ENCODE measurements at regions of chr2 and their contacts with region 1.

Region 1: GRCh38 chr2:186589612-186590349 is at the start of gene ITGAV:
- DNase-seq: peak; percentile 93
- ATAC-seq: peak; percentile 97
- H3K4me3 ChIP-seq: peak within 1 kb of the TSS; percentile 92 to 97 (median 95)
- H3K27ac ChIP-seq: peak within 1 kb of the TSS; percentile 89
- H3K4me1 ChIP-seq: peaks cover 46% of the 10 kb centered on the region
- H3K27me3 ChIP-seq: no peaks in the 10 kb centered on the region; a peak in 2 of 5 replicates
- CTCF ChIP-seq: peak; percentile 55
- EP300 ChIP-seq: 0 out of 4 replicates have a peak, but pooled peaks of 1 of the 2 experiments have one; percentile 21
- POLR2A ChIP-seq: peak; percentile 92 to 96
- RAD21 ChIP-seq: peak; percentile 73
- total RNA-seq, gene ITGAV: 35.8 and 60.4 TPM in 2 replicates

Region 2: GRCh38 chr2:186518945-186519344 is 70.8 kb before region 1 on chr2:
- CTCF ChIA-PET with region 1: no interaction called
- POLR2A ChIA-PET with region 1: interaction called, 11 read pairs
- in situ Hi-C with region 1: no loop called
- intact Hi-C with region 1: no loop called
- DNase-seq: no peak
- ATAC-seq: no peak
- H3K4me3 ChIP-seq: no peak overlapping the region
- H3K27ac ChIP-seq: no peak overlapping the region
- H3K4me1 ChIP-seq: no peaks in the 10 kb centered on the region
- H3K27me3 ChIP-seq: no peaks in the 10 kb centered on the region
- CTCF ChIP-seq: no peak
- EP300 ChIP-seq: no peak
- POLR2A ChIP-seq: no peak
- RAD21 ChIP-seq: no peak

Region 3: DNA sequence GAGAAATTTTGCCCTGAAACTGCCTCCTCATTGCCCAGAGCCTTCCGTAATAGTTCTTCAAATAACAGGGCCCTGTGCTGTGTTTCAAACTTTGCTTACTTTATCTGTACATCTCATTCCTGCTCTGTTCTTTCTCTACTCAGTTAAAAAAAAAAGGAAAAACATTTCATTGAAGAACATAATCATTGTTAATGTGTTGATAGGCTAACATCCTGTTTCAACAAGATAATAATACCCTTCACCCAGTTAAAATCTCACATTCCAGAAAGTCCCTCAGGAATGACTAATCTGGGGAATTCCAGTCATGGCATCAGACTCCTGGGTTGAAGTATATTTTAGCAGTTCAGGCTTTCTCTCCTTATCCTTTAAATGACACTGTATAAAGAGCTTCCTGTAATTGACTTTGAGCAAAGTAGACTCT is 45.5 kb before region 1 on chr2:
- CTCF ChIA-PET with region 1: no interaction called
- POLR2A ChIA-PET with region 1: interaction called, 12 read pairs
- in situ Hi-C with region 1: no loop called
- intact Hi-C with region 1: no loop called
- DNase-seq: peak; percentile 93
- ATAC-seq: peak; percentile 91
- H3K4me3 ChIP-seq: no peak overlapping the region; a peak in 1 of 6 replicates
- H3K27ac ChIP-seq: peak overlapping the region; percentile 53
- H3K4me1 ChIP-seq: peaks cover 54% of the 10 kb centered on the region
- H3K27me3 ChIP-seq: no peaks in the 10 kb centered on the region
- CTCF ChIP-seq: no peak
- EP300 ChIP-seq: peak in 1 of 2 experiments; percentile 83; a peak in 3 of 4 replicates
- POLR2A ChIP-seq: no peak
- RAD21 ChIP-seq: no peak

Region 4: DNA sequence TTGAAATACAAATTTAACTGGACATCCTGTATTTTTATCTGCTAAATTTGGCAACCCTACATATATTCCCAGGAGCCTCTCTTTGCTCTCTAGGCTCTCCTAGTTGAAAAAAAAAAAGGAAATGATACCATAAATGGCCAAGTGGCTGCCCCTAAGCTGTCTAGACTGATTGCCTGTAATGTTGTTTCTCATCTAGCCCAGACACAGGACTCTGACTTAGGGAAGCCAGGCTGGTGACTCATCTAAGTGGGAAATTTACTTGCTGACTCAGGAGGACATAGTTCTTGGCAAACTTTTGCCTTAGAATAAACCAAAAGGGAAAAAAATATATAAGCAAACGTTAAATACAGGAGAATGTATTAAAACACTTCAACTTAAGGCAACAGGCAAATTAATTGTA is 14.5 kb before region 1 on chr2:
- CTCF ChIA-PET with region 1: no interaction called
- POLR2A ChIA-PET with region 1: interaction called, 47 read pairs
- in situ Hi-C with region 1: no loop called
- intact Hi-C with region 1: loop called (anchors 2 kb)
- DNase-seq: peak; percentile 94
- ATAC-seq: peak; percentile 97
- H3K4me3 ChIP-seq: no peak overlapping the region
- H3K27ac ChIP-seq: no peak overlapping the region
- H3K4me1 ChIP-seq: peaks cover 26% of the 10 kb centered on the region
- H3K27me3 ChIP-seq: no peaks in the 10 kb centered on the region
- CTCF ChIP-seq: no peak
- EP300 ChIP-seq: peak in 1 of 2 experiments; percentile 54; a peak in 1 of 4 replicates
- POLR2A ChIP-seq: no peak
- RAD21 ChIP-seq: no peak

Region 5: DNA sequence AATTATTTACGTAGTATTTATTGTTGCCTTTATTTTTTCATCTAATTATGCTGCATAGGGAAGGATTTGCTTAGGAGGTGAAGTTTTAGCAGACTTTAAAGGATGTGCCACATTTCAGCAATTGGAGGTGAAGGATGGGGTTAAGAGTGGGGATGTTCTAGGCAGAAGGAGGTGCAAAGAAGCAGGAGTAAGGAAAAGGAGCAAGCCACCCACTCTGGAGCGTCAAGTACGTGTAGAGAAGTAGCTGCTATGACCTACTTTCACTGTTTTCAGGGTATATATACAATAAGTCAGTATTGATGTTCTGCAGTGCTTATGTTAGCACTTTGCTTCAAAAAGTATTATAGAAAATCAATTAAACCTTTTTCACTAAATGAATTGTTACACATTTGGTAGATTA is 34.5 kb after region 1 on chr2:
- CTCF ChIA-PET with region 1: no interaction called
- POLR2A ChIA-PET with region 1: no interaction called
- in situ Hi-C with region 1: no loop called
- intact Hi-C with region 1: no loop called
- DNase-seq: no peak
- ATAC-seq: no peak
- H3K4me3 ChIP-seq: no peak overlapping the region
- H3K27ac ChIP-seq: no peak overlapping the region
- H3K4me1 ChIP-seq: no peaks in the 10 kb centered on the region
- H3K27me3 ChIP-seq: no peaks in the 10 kb centered on the region
- CTCF ChIP-seq: no peak
- EP300 ChIP-seq: no peak
- POLR2A ChIP-seq: no peak
- RAD21 ChIP-seq: no peak

Region 6: DNA sequence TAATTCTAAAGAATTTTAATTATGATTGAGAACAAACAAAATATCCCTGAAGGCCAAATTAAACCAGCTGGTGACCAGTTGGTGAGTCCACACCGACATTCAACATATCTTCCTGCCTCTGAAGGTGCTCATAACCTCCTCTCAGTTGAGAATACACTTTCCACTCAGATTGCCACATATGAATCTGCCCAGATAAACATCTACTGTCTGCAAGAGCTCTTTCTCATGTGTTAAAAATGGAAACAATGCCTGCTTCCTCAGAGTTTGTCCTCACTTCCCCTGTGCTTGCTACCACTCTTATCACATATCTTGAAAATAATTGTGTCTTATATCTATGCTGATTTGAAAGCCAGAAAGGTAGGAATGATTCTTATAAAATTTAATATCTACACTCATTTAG is 1524.2 kb after region 1 on chr2:
- CTCF ChIA-PET with region 1: no interaction called
- POLR2A ChIA-PET with region 1: no interaction called
- in situ Hi-C with region 1: no loop called
- intact Hi-C with region 1: loop called (anchors 5 kb)
- DNase-seq: no peak
- ATAC-seq: no peak
- H3K4me3 ChIP-seq: no peak overlapping the region
- H3K27ac ChIP-seq: no peak overlapping the region
- H3K4me1 ChIP-seq: no peaks in the 10 kb centered on the region
- H3K27me3 ChIP-seq: no peaks in the 10 kb centered on the region
- CTCF ChIP-seq: no peak
- EP300 ChIP-seq: no peak
- POLR2A ChIP-seq: no peak
- RAD21 ChIP-seq: no peak

Measured in HepG2 (cell line).